Activated CD4-positive, alpha-beta memory T cell treated with anti-CD3 and anti-CD28 coated beads for 36 hours (primary cell): ENCODE measurements at regions of chr1 and their contacts with region 1.

Region 1: GRCh38 chr1:203625628-203626019 is 1.0 kb upstream of the ATP2B4 start:
- DNase-seq: peak; percentile 78
- H3K4me3 Mint-ChIP-seq: peak overlapping the region; percentile 90
- H3K27ac Mint-ChIP-seq: peak overlapping the region; percentile 97
- H3K4me1 Mint-ChIP-seq: peaks cover 52% of the 10 kb centered on the region
- H3K27me3 Mint-ChIP-seq: no peaks in the 10 kb centered on the region

Region 2: GRCh38 chr1:203267347-203267846 is 358.2 kb before region 1 on chr1:
- CTCF ChIA-PET with region 1: interaction called, 10 read pairs
- POLR2A ChIA-PET with region 1: no interaction called
- intact Hi-C with region 1: no loop called
- DNase-seq: peak; percentile 88
- H3K4me3 Mint-ChIP-seq: peak overlapping the region; percentile 82
- H3K27ac Mint-ChIP-seq: peak overlapping the region; percentile 89
- H3K4me1 Mint-ChIP-seq: peaks cover 22% of the 10 kb centered on the region
- H3K27me3 Mint-ChIP-seq: no peaks in the 10 kb centered on the region

Region 3: GRCh38 chr1:203504397-203505250 is 121.0 kb before region 1 on chr1:
- CTCF ChIA-PET with region 1: interaction called, 11 read pairs
- POLR2A ChIA-PET with region 1: no interaction called
- intact Hi-C with region 1: no loop called
- DNase-seq: peak; percentile 84
- H3K4me3 Mint-ChIP-seq: no peak overlapping the region
- H3K27ac Mint-ChIP-seq: no peak overlapping the region
- H3K4me1 Mint-ChIP-seq: no peaks in the 10 kb centered on the region
- H3K27me3 Mint-ChIP-seq: peaks cover 2% of the 10 kb centered on the region

Region 4: GRCh38 chr1:203609979-203610493 is 15.6 kb before region 1 on chr1:
- CTCF ChIA-PET with region 1: interaction called, 19 read pairs
- POLR2A ChIA-PET with region 1: interaction called, 12 read pairs
- intact Hi-C with region 1: loop called (anchors 1 kb)
- DNase-seq: no peak
- H3K4me3 Mint-ChIP-seq: no peak overlapping the region
- H3K27ac Mint-ChIP-seq: peak overlapping the region; percentile 53
- H3K4me1 Mint-ChIP-seq: peaks cover 58% of the 10 kb centered on the region
- H3K27me3 Mint-ChIP-seq: no peaks in the 10 kb centered on the region

Region 5: GRCh38 chr1:203682473-203683383 is 57.1 kb after region 1 on chr1:
- CTCF ChIA-PET with region 1: interaction called, 11 read pairs
- POLR2A ChIA-PET with region 1: interaction called, 11 read pairs
- intact Hi-C with region 1: no loop called
- DNase-seq: peak; percentile 78
- H3K4me3 Mint-ChIP-seq: peak overlapping the region; percentile 24
- H3K27ac Mint-ChIP-seq: peak overlapping the region; percentile 89
- H3K4me1 Mint-ChIP-seq: peaks cover 50% of the 10 kb centered on the region
- H3K27me3 Mint-ChIP-seq: no peaks in the 10 kb centered on the region

Region 6: GRCh38 chr1:203769505-203770343 is 144.1 kb after region 1 on chr1:
- CTCF ChIA-PET with region 1: interaction called, 7 read pairs
- POLR2A ChIA-PET with region 1: interaction called, 18 read pairs
- intact Hi-C with region 1: loop called (anchors 1 kb)
- DNase-seq: no peak
- H3K4me3 Mint-ChIP-seq: no peak overlapping the region
- H3K27ac Mint-ChIP-seq: no peak overlapping the region
- H3K4me1 Mint-ChIP-seq: peaks cover 17% of the 10 kb centered on the region
- H3K27me3 Mint-ChIP-seq: no peaks in the 10 kb centered on the region

Region 7: DNA sequence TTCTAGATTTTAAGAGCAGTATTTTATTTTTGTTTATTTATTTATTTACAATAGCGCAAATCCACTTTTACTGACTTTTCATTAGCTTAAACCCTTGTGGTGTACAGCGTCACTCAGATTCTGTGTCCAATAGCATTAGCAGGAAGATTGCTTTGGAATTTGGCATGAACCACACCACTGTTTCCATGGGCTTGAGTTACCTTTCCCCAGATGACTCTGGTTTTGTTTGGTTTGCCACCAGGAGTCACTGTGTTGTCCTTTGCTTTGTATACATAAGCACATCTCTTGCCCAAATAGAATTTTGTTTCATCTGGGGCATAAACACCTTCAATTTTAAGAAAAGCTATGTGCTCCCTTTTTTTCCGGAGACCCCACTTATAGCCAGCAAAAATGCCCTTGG is 209.9 kb after region 1 on chr1:
- CTCF ChIA-PET with region 1: no interaction called
- POLR2A ChIA-PET with region 1: no interaction called
- intact Hi-C with region 1: no loop called
- DNase-seq: no peak
- H3K4me3 Mint-ChIP-seq: no peak overlapping the region
- H3K27ac Mint-ChIP-seq: no peak overlapping the region
- H3K4me1 Mint-ChIP-seq: no peaks in the 10 kb centered on the region
- H3K27me3 Mint-ChIP-seq: no peaks in the 10 kb centered on the region

Region 8: DNA sequence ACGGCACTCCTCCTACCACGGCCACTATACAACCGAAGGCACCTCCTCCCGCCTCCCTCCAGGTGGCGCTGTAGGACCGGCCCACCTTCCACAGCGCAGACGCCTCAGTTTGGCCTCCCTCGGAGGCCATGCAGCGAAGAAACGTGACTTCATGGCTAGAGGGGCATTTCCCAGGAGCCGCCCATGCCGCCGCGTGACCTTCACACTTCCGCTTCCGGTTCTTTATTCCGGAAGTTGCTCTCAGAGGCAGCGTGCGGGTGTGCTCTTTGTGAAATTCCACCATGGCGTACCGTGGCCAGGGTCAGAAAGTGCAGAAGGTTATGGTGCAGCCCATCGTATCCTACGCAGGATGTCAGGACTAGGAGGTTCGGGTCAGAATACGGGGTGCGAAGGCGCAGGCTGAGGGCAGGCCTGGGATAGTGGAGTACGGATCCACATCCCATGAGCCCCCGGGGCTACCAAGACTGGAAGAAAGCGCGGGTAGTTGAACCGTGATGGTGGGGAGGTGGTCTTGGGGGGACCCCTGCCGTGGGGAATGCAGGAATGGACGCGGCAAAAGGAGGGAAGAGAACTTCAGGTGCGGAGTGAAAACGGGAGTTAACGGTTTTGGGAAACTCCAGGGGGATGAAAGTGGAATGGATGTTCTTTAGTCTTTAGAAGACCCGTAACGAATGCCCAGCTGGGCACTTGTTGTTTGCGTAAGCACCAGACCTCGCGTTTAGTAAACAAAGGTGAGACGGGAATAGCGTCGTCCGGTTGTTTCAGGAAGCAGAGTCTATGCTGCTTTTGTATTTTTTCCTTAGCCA is 236.0 kb after region 1 on chr1 and contains the start of gene SNRPE:
- CTCF ChIA-PET with region 1: no interaction called
- POLR2A ChIA-PET with region 1: no interaction called
- intact Hi-C with region 1: loop called (anchors 2 kb)
- DNase-seq: peak; percentile 98
- H3K4me3 Mint-ChIP-seq: peak within 1 kb of the TSS; percentile 93
- H3K27ac Mint-ChIP-seq: peak within 1 kb of the TSS; percentile 90
- H3K4me1 Mint-ChIP-seq: peaks cover 10% of the 10 kb centered on the region
- H3K27me3 Mint-ChIP-seq: no peaks in the 10 kb centered on the region
- total RNA-seq, gene SNRPE: 327 to 339 TPM